PC-9 (cell line): ENCODE measurements at regions of chr19 and their contacts with region 1.

Region 1: DNA sequence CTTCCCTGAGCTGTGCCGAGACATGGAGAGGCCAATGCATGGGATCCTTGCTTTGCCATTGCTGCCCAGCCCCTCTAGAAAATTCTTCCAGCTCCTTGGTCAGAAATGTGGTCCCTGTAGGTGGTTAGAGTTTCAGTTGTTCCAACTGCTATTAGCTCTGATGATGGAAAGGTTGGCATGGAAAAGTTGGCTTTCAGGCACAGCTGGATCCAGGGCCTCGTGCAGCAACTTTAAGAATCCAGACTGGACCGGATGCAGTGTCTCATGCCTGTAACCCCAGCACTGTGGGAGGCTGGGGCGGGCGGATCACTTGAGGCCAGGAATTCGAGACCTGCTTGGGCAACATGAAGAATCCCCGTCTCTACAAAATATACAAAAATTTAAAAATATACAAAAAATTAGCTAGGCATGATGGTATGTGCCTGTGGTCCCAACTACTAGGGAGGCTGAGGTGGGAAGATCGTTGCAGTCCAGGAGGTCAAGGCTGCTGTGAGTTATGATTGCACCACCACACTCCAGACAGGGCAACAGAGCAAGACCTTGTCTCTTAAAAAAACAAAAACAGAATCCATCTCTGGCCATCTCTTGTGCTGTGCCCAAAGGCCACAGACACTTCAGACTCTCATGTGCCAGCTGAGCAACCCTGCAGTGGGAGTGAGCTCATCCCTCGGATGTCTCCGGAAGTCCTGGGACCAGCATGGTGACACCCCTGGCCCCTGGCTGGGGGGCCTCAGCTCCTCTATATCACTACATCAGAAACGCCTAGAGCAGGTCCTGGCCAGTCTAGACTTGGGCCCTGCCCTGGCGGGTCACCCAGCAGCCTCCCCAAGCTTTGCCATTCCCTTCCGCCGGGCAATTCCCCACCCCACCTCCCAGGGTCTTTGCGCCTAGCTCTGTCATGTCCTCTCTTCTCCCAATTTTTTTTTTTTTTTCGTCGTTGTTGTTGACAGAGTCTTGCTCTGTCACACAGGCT is 16.8 kb downstream of the MEX3D start:
- DNase-seq: no peak
- H3K4me3 ChIP-seq: no peak overlapping the region
- H3K27ac ChIP-seq: no peak overlapping the region
- H3K4me1 ChIP-seq: no peaks in the 10 kb centered on the region
- H3K27me3 ChIP-seq: no peaks in the 10 kb centered on the region
- CTCF ChIP-seq: no peak

Region 2: GRCh38 chr19:1700002-1700732 is 148.8 kb after region 1 on chr19:
- CTCF ChIA-PET with region 1: no interaction called
- POLR2A ChIA-PET with region 1: no interaction called
- intact Hi-C with region 1: no loop called
- DNase-seq: no peak
- H3K4me3 ChIP-seq: no peak overlapping the region
- H3K27ac ChIP-seq: no peak overlapping the region
- H3K4me1 ChIP-seq: no peaks in the 10 kb centered on the region
- H3K27me3 ChIP-seq: peaks cover 17% of the 10 kb centered on the region; the same call in 1 of the 2 replicates
- CTCF ChIP-seq: no peak

Region 3: DNA sequence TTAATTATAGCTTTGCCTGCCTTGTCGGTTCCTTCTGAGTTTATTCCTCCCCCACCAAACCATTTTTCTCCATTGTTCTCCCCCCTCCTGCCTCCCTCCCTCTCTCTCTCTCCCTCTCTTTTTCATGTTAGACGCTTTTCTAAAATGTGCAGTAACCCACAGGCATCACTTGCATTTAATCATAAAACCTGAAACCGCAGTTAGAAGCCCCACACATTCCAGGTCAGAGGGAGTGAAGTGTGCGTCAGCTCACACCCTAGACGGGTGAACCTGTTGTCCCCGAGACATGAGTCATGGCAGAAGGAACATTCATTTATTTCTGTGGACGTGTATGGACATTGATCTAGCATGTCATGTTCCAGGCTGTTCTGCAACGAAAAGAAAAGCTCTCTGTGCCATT is 221.8 kb after region 1 on chr19:
- CTCF ChIA-PET with region 1: no interaction called
- POLR2A ChIA-PET with region 1: interaction called, 51 read pairs
- intact Hi-C with region 1: no loop called
- DNase-seq: peak; percentile 37 to 83
- H3K4me3 ChIP-seq: no peak overlapping the region
- H3K27ac ChIP-seq: peak overlapping the region; percentile 9; the same call in 1 of the 2 replicates
- H3K4me1 ChIP-seq: no peaks in the 10 kb centered on the region
- H3K27me3 ChIP-seq: no peaks in the 10 kb centered on the region
- CTCF ChIP-seq: no peak